ENCODE measurements at regions of chr15 and their contacts with region 1.

Region 1: DNA sequence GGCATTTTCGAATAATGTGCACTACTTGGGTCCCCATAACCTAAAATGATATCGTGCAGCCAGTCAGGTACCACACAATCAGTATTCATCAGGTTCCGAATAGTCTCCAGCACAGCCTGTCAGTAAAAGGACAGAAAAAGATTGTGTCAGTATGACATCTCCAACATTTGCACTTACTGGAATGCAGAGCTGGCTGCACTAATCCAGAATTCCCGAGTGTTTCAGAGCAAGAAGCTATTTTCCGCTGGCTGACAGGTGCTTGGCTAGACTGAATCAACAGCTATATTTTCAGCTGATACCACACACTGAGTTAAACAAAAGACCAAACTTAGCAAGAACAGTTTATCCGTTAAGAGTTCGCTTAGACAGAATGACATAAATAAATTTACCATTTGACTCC is 68.8 kb downstream of the AQR start:
- DNase-seq: no peak
- CTCF ChIP-seq: no peak

Region 2: GRCh38 chr15:34055853-34056595 is 844.7 kb before region 1 on chr15:
- in situ Hi-C with region 1: loop called (anchors 25 kb)
- DNase-seq: no peak
- CTCF ChIP-seq: no peak

Region 3: DNA sequence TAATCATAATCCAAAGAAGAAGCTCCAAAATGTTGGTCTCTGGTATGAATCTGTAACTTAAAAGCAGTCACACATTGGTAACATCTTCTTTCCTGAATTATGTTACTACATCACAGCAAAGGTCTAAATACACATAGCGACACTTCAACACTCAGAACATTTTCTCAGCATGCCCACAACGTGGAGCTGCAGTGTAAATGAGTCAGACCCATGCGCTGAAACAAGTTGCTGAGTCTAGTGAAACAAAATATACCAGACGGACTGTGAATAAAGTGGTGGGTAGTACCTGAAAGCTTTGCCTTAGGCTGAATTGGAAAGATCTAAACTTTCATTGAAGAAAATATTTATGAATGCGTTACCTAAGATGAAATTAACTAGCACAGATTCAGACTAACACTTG is 284.1 kb before region 1 on chr15:
- in situ Hi-C with region 1: loop called (anchors 25 kb)
- DNase-seq: no peak
- CTCF ChIP-seq: peak; percentile 21

Region 4: GRCh38 chr15:34795267-34796081 is 105.3 kb before region 1 on chr15 and contains the start of gene ACTC1:
- in situ Hi-C with region 1: no loop called
- DNase-seq: no peak
- CTCF ChIP-seq: no peak